HepG2 (cell line): ENCODE measurements at regions of chr16 and their contacts with region 1.

Region 1: GRCh38 chr16:75622761-75623605 is at the start of gene ADAT1:
- DNase-seq: peak; percentile 97
- ATAC-seq: peak; percentile 95
- H3K4me3 ChIP-seq: peak within 1 kb of the TSS; percentile 80 to 86 (median 86)
- H3K27ac ChIP-seq: peak within 1 kb of the TSS; percentile 69
- H3K4me1 ChIP-seq: peaks cover 34% of the 10 kb centered on the region
- H3K27me3 ChIP-seq: no peaks in the 10 kb centered on the region; a peak in 1 of 5 replicates
- CTCF ChIP-seq: peak; percentile 15; the same call in 1 of the 2 replicates
- EP300 ChIP-seq: no peak
- POLR2A ChIP-seq: peak; percentile 88 to 89
- RAD21 ChIP-seq: peak; percentile 53
- total RNA-seq, gene ADAT1: 40.8 and 50.7 TPM in 2 replicates

Region 2: DNA sequence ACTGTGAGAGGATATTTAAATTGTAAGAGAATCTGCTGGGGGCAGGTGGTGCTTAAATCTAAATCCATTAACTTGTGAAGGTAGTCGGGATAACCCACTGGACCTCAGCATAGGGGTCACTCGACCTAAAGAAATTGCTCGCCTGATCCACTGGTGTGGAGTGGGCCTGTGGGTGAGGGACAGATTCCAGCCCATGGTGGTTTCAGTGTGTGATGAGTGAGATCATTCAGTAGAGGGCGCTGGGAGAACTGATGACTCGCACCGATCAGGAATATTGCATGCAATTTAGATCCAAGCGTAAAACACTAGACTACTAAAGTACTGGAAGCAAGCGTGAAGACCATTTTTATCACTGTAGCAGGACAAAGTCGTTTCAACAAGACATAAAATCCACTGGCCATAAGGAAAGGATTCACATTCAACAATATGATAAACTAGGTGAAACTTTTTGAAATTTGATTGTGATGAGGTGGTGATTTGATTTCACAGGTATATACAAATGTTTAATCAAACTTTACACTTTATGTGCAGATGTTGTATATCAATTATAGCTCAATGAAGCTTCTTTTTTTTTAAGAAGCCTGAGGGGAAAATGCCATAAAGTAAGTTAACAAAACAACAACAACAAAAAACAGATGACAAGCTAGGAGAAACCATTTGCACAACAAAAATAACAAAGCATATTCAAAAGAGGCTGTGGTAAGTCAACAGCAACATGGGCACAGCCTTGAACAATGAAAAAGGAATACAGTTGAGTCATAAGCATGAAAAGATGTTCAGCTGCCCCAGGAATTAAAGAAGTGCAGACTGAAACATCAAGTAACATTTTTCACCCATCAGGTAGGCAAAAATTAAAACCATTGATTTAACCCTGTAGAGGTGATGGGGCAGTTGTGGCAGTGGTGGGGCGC is 151.0 kb before region 1 on chr16:
- CTCF ChIA-PET with region 1: interaction called, 5 read pairs
- POLR2A ChIA-PET with region 1: no interaction called
- in situ Hi-C with region 1: no loop called
- intact Hi-C with region 1: loop called (anchors 1 kb)
- DNase-seq: peak; percentile 61
- ATAC-seq: peak; percentile 94
- H3K4me3 ChIP-seq: no peak overlapping the region
- H3K27ac ChIP-seq: no peak overlapping the region
- H3K4me1 ChIP-seq: peaks cover 6% of the 10 kb centered on the region
- H3K27me3 ChIP-seq: no peaks in the 10 kb centered on the region; a peak in 1 of 5 replicates
- CTCF ChIP-seq: peak; percentile 94
- EP300 ChIP-seq: no peak
- POLR2A ChIP-seq: no peak
- RAD21 ChIP-seq: peak; percentile 77

Region 3: DNA sequence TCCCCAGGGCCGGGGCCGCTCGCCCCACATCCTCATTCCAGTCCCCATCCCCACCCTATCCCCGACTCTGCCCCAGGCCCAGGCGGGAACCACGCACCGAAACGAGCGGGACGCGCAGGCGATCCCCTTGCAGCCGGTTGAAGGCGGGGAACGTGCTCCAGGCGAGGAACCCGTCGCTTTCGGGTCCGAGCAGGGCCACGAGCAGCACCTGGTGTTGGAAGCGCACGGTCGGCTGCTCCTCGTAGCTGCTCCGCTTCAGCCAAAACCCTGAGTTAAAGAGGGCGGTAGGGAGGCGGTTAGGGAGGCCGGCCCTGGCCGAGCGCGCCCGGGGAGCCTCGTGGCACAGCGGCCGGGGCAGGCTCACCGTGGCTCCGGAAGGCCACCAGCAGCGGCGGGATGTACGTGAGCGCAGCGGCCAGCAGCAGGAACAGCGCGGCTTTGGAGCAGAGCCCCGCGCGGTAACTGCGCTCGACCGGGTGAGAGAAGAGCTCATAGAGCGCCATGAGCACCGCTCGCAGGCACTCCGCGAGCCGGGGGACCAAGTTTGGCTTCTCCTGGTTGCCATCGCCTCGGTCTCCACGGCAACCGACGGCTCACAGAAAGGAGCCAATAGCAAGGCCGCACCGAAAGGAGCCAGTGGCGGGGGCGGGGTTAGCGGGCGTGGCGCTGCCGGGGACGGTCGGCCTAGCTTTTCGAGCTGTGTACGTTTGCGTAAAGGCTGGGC is 67.1 kb before region 1 on chr16 and contains the start of gene TMEM231:
- CTCF ChIA-PET with region 1: no interaction called
- POLR2A ChIA-PET with region 1: interaction called, 4 read pairs
- in situ Hi-C with region 1: no loop called
- intact Hi-C with region 1: loop called (anchors 5 kb)
- DNase-seq: peak; percentile 91
- ATAC-seq: peak; percentile 94
- H3K4me3 ChIP-seq: peak within 1 kb of the TSS; percentile 68 to 85 (median 70)
- H3K27ac ChIP-seq: peak within 1 kb of the TSS; percentile 32
- H3K4me1 ChIP-seq: peaks cover 28% of the 10 kb centered on the region
- H3K27me3 ChIP-seq: peaks cover 0 to 12% of the 10 kb centered on the region in 2 experiments; a peak in 2 of 5 replicates
- CTCF ChIP-seq: no peak; the same call in none of the 2 replicates
- EP300 ChIP-seq: no peak
- POLR2A ChIP-seq: peak; percentile 28 to 31; a peak in 2 of 4 replicates
- RAD21 ChIP-seq: 0 out of 2 replicates have a peak, but pooled peaks have one; percentile 17
- total RNA-seq, gene TMEM231: 2.3 and 3.5 TPM in 2 replicates

Region 4: GRCh38 chr16:75566040-75566810 is 56.8 kb before region 1 on chr16 and contains the start of gene GABARAPL2:
- CTCF ChIA-PET with region 1: no interaction called
- POLR2A ChIA-PET with region 1: interaction called, 16 read pairs
- in situ Hi-C with region 1: no loop called
- intact Hi-C with region 1: no loop called
- DNase-seq: peak; percentile 70
- ATAC-seq: peak; percentile 86
- H3K4me3 ChIP-seq: peak within 1 kb of the TSS; percentile 87 to 96 (median 88)
- H3K27ac ChIP-seq: peak within 1 kb of the TSS; percentile 34
- H3K4me1 ChIP-seq: peaks cover 28% of the 10 kb centered on the region
- H3K27me3 ChIP-seq: peaks cover 0 to 4% of the 10 kb centered on the region in 2 experiments; a peak in 2 of 5 replicates
- CTCF ChIP-seq: no peak; the same call in 1 of the 2 replicates
- EP300 ChIP-seq: no peak; a peak in 1 of 4 replicates
- POLR2A ChIP-seq: peak; percentile 16 to 81; a peak in 2 of 4 replicates
- RAD21 ChIP-seq: peak; percentile 33; the same call in 1 of the 2 replicates
- total RNA-seq, gene GABARAPL2: 76.4 and 82.4 TPM in 2 replicates

Region 5: DNA sequence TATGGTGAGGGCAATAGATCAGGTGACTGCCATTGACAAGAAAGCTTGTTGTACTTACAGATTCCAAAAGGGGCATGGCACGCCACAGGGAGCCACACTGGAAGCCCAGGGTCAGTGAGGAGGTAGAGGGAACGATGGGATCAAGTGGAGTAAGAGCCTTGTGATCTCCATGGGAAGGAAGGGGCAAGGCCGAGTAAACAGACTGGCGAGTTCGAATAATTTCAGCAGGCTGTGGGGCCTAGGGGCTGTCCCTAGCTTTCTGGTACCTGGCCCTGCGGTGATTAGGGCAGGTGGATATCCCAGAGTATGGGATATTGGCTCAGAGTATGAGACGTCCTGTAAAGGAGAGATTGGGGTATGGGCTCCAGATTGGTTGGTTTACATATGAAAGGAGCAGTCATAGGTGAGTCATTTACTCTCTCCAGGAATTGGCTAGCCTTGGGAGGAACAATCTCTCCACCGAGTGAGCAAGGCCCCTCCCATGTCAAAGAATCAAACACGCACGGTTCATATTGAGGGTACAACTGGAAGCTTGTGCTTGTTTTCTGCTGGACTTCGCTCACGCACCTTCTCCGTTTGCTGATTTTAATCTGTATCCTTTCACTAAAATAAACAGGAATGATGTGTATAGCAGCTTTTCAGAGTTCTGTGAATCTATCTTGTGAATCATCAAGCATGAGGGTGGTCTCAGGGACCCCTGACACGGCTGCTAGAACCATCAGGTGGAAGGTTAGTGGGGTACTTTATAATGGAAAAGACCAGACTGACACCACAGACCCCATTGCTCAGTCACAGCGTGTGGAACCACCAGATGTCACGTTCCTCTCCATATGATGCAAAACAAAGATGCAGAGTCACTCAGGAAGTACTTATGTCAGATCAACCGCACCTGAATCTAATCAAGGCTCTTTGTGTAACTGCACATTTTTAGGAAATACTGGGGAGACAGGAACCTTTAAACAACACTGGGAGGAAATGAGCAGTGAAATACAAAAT is 28.9 kb before region 1 on chr16:
- CTCF ChIA-PET with region 1: no interaction called
- POLR2A ChIA-PET with region 1: no interaction called
- in situ Hi-C with region 1: no loop called
- intact Hi-C with region 1: loop called (anchors 1 kb)
- DNase-seq: peak; percentile 87
- ATAC-seq: peak; percentile 97
- H3K4me3 ChIP-seq: peak overlapping the region in 2 of 3 experiments; percentile 10 to 42; a peak in 3 of 6 replicates
- H3K27ac ChIP-seq: peak overlapping the region; percentile 72
- H3K4me1 ChIP-seq: peaks cover 20% of the 10 kb centered on the region
- H3K27me3 ChIP-seq: no peaks in the 10 kb centered on the region
- CTCF ChIP-seq: 0 out of 2 replicates have a peak, but pooled peaks have one; percentile 3
- EP300 ChIP-seq: peak in 1 of 2 experiments; percentile 34; a peak in 2 of 4 replicates
- POLR2A ChIP-seq: no peak
- RAD21 ChIP-seq: no peak

Region 6: DNA sequence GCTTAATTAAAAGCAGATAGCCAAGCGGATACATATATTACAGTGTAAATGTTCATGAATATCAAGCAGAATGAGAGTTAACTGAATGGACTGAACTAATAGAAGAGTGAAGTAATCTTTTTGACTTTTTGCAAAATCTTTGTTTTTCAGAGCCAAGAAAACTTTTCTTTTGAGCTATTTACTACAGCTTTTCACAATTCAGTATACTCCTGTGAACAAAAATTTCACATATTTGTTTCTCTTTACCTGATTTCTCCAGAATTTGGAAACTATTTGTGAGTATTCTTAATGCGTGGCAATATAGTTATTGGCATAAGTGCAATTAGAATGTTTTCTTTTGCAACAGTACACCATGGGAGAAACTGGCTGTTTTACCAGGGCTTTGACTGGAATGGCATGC is 87.4 kb after region 1 on chr16:
- CTCF ChIA-PET with region 1: no interaction called
- POLR2A ChIA-PET with region 1: no interaction called
- in situ Hi-C with region 1: no loop called
- intact Hi-C with region 1: no loop called
- DNase-seq: no peak
- ATAC-seq: no peak
- H3K4me3 ChIP-seq: no peak overlapping the region
- H3K27ac ChIP-seq: no peak overlapping the region
- H3K4me1 ChIP-seq: no peaks in the 10 kb centered on the region
- H3K27me3 ChIP-seq: no peaks in the 10 kb centered on the region; a peak in 2 of 5 replicates
- CTCF ChIP-seq: no peak
- EP300 ChIP-seq: no peak
- POLR2A ChIP-seq: no peak
- RAD21 ChIP-seq: no peak

Region 7: DNA sequence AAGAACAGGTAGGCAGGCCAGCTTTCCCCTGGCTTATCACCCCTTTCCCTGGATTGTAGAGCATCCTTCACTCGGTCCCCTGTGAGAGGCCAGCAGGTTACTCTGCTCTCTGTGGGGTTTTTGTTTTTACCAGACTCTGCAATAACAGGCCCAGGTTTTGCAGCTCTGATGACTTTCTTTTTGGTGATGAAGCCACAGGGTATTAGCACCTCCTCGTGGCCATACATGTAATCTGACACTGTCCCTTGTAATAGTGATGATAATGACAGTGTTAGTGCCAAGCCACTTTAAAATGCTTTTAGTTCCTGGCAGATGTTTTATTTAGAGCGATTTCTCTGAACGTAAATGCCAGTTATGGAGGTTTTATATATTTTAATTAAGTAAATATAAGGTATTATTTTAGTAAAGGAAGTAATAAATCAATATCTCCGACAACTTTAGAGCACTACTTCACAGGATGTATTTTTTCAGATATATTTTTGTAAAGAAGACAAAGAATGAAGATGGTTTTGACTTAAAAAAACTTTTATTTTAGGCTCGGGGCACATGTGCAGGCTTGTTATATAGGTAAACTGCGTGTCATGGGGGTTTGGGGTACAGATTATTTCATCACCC is 141.3 kb after region 1 on chr16:
- CTCF ChIA-PET with region 1: no interaction called
- POLR2A ChIA-PET with region 1: no interaction called
- in situ Hi-C with region 1: no loop called
- intact Hi-C with region 1: loop called (anchors 1 kb)
- DNase-seq: peak; percentile 69
- ATAC-seq: peak; percentile 98
- H3K4me3 ChIP-seq: no peak overlapping the region
- H3K27ac ChIP-seq: no peak overlapping the region
- H3K4me1 ChIP-seq: no peaks in the 10 kb centered on the region
- H3K27me3 ChIP-seq: no peaks in the 10 kb centered on the region
- CTCF ChIP-seq: peak; percentile 91
- EP300 ChIP-seq: no peak
- POLR2A ChIP-seq: no peak
- RAD21 ChIP-seq: peak; percentile 86